Heart left ventricle (tissue), 16 donors: ENCODE measurements at regions of chr7 and their contacts with region 1.

Region 1: GRCh38 chr7:44565097-44565794 is 8.5 kb downstream of the DDX56 start:
- DNase-seq: peak; percentile 50 to 86 (median 73)
- ATAC-seq: peak; percentile 73 to 91 (median 88)
- H3K4me3 ChIP-seq: no peak overlapping the region
- H3K27ac ChIP-seq: peak overlapping the region in 1 of 12 donors; percentile 37
- H3K4me1 ChIP-seq: peaks cover 0 to 11% (median 1%) of the 10 kb centered on the region in 12 donors
- H3K27me3 ChIP-seq: no peaks in the 10 kb centered on the region
- CTCF ChIP-seq: peak; percentile 92 to 99 (median 97)
- POLR2A ChIP-seq: no peak

Region 2: DNA sequence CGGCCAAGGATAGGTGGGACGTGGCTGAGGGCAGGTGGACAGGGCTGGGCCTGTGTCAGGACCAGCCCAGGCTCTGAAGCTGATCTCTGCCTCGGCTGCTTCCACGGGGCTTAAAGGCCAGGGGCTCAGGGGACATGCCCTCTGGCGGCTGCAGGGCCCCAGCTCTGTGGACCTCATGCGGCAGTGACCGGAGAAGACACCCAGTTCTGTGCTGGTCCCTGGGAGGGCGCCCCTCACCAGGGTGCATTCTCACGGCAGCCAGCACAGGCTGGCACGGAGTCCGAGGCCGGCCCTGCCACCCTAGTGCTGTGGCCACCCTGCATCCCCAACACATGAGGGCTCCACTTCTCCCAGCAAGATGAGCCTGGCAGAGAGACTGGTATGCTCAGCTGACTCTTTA is 334.2 kb before region 1 on chr7:
- intact Hi-C with region 1: loop called in 2 of 10 experiments (anchors 5 to 10 kb)
- DNase-seq: no peak
- ATAC-seq: peak in 3 of 4 donors; percentile 26 to 52 (median 26)
- H3K4me3 ChIP-seq: no peak overlapping the region
- H3K27ac ChIP-seq: peak overlapping the region in 1 of 12 donors; percentile 34
- H3K4me1 ChIP-seq: peaks cover 0 to 6% (median 0%) of the 10 kb centered on the region in 12 donors
- H3K27me3 ChIP-seq: peaks cover 0 to 3% (median 0%) of the 10 kb centered on the region in 9 donors
- CTCF ChIP-seq: peak in 2 of 12 donors; percentile 9 to 35
- POLR2A ChIP-seq: no peak

Region 3: GRCh38 chr7:44368885-44369284 is 196.4 kb before region 1 on chr7:
- intact Hi-C with region 1: loop called in 4 of 10 experiments (anchors 10 kb)
- DNase-seq: no peak
- ATAC-seq: no peak
- H3K4me3 ChIP-seq: no peak overlapping the region
- H3K27ac ChIP-seq: no peak overlapping the region
- H3K4me1 ChIP-seq: no peaks in the 10 kb centered on the region
- H3K27me3 ChIP-seq: no peaks in the 10 kb centered on the region
- CTCF ChIP-seq: no peak
- POLR2A ChIP-seq: no peak

Region 4: DNA sequence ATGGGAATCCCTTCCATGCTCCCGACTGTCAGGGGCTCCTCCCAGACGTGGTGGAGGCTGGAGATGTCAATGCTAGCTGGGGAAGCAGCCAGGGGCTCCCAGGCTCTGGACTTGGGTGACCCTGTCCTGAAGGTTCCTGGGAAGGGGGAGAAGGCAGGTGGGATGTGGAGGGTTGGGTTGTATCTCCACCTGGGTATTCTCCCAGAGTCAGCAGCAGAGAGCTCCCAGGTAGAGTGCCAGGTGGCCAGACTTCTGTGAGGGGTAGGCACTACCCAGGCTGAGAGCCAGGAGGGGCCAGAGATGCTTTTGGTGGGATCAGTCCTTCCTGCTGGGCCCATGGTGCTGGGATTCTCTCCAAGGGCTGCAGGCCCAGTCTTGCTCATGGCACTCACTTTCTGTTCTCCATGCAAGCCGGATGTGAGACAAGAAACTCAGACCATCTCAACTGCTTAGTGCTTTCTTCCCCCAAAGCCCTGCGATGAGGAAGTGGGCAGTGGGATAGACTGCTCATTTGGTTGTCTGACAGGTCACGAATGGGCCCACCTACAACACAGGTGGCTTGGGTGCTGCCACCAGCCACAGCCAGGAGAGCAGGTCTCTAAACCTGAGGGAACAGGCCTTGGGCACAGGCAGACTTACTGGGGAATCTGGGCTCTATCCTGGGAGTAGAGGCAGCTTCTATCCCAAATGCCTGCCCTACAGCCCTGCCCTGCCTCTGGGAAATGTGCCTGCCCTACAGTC is 187.4 kb before region 1 on chr7:
- intact Hi-C with region 1: loop called in 4 of 10 experiments (anchors 5 to 10 kb)
- DNase-seq: no peak
- ATAC-seq: no peak
- H3K4me3 ChIP-seq: no peak overlapping the region
- H3K27ac ChIP-seq: no peak overlapping the region
- H3K4me1 ChIP-seq: peaks cover 0 to 8% (median 2%) of the 10 kb centered on the region in 12 donors
- H3K27me3 ChIP-seq: no peaks in the 10 kb centered on the region
- CTCF ChIP-seq: no peak
- POLR2A ChIP-seq: no peak

Region 5: DNA sequence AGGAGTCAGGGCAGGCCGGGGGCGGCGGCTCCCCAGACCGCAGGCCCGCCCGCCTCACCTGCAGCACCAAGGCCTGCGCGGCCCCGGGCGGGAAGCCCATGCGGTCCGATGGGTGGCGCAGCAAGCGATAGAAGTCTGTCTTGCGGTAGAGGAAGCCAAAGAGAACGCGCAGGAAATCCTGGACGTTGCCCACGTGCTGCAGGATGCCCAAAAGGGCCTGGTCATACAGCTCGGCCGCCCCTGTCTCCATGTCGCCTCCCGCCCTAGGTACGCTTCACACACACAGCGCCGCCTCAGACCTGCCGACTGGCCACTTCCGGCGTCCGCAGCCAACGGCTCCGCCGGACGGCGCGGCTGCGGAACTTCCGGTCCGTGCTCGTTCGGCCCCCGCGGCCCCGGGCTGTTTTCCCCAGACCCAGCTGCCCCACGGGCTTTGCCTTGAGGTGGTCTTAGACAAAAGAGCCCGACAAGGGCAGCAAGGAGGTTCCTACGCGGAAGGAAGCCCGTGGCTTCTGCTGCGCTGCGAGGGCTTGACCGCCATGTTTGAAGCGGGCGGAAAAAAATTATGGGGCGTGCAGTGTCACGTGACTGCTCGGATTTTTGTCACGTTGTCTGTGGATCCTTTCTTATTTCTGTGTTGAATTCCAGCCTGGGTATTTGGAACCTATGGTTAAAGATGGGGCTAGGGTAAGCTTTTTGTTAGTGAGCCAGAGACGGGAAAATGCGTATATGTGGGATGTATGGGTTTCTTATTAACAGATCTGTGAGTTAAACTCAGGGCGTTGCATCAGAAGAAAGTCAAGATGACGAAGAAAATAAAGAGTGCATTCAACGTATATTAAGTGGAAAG is 74.7 kb before region 1 on chr7 and contains the start of gene NUDCD3:
- intact Hi-C with region 1: loop called in 3 of 10 experiments (anchors 5 to 10 kb)
- DNase-seq: peak; percentile 86 to 91 (median 88)
- ATAC-seq: peak; percentile 95 to 98 (median 97)
- H3K4me3 ChIP-seq: peak within 1 kb of the TSS; percentile 55 to 96 (median 90)
- H3K27ac ChIP-seq: peak within 1 kb of the TSS; percentile 84 to 100 (median 98)
- H3K4me1 ChIP-seq: peaks cover 8 to 46% (median 33%) of the 10 kb centered on the region in 12 donors
- H3K27me3 ChIP-seq: peaks cover 0 to 4% (median 0%) of the 10 kb centered on the region in 9 donors
- CTCF ChIP-seq: peak in 5 of 12 donors; percentile 5 to 33 (median 21)
- POLR2A ChIP-seq: peak in 1 of 2 donors; percentile 40
- total RNA-seq, gene NUDCD3: 59.5 to 133 (median 98.7) TPM

Region 6: DNA sequence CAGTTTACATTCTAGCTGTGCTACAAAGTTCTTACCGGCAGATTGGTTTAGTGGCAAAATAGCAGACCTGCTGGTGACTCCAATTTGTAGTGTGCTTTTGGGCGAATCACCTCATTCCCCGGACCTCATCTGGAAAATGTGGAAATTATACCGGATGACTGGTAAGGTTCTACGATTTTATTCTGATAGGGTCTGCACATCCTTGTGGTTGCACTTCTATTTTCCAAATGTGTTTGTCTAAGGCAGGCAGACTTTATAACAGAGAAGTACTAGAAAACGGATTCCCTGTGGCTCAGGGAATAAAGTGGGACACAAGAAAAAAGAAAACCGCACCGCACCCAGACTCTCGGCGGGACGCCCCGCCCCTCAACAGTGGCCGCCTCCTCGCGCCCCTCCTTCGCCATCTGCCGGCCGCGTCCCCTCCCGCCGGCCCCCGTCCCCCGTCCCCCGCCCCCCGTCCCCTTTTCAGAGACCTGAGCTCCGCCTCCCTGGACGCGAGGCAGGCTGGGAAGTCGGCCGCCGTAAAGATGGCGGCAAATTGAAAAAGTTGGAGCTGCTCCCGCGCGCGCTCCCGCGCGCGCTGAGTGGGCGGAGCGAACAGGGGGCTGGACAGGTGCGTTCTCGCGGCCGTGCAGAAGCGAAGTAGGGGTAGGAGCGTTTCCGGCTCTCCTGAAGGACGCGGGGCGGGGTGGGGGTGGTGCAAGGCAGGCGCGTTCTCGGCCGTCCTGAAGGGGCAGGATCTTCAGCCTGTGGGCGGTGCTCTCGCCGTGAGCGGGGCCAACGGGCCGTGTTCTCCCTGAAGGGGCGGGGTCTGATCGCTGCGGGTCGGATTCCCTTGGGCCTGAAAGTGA is 434.2 kb after region 1 on chr7:
- intact Hi-C with region 1: no loop called
- DNase-seq: peak; percentile 99 to 100 (median 100)
- ATAC-seq: peak; percentile 94 to 98 (median 96)
- H3K4me3 ChIP-seq: peak overlapping the region; percentile 28 to 85 (median 72)
- H3K27ac ChIP-seq: peak overlapping the region; percentile 47 to 95 (median 88)
- H3K4me1 ChIP-seq: peaks cover 0 to 43% (median 13%) of the 10 kb centered on the region in 12 donors
- H3K27me3 ChIP-seq: no peaks in the 10 kb centered on the region
- CTCF ChIP-seq: peak in 7 of 12 donors; percentile 4 to 30 (median 11)
- POLR2A ChIP-seq: peak in 1 of 2 donors; percentile 54